ENCODE measurements at regions of chr21 and their contacts with region 1.

Region 1: GRCh38 chr21:42892931-42893755 is at the start of gene NDUFV3:
- DNase-seq: peak; percentile 99 to 100
- H3K4me3 ChIP-seq: peak within 1 kb of the TSS; percentile 87 to 91
- H3K27ac ChIP-seq: peak within 1 kb of the TSS; percentile 90 to 97
- H3K4me1 ChIP-seq: peaks cover 0 to 3% of the 10 kb centered on the region in 2 donors
- H3K27me3 ChIP-seq: no peaks in the 10 kb centered on the region
- CTCF ChIP-seq: no peak
- total RNA-seq, gene NDUFV3: 60.7 TPM

Region 2: DNA sequence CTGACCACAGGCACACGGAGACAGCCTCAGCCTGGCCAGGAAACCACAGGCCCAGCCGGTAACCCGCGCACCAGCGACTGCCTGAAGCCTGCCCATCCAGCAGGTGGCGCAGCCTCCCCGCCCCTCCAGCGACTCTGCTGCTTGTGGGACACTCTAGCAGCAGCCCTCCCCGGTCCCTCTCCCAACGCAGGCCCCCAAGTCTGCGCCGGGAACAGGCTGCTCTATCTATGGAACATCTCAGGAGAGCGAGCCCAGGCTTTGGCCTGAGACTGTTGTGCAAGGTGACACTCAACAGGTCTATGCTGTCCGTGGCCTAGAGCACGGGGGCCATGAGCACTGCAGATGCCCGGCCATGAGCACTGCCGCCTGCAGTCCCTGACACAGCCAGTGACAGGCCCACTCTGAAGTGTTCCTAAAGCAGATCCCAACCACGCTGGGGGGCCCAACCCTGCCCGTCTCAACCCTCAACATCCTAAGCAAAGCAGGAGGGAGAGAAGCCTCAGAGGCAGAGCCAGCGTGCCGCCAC is 42.2 kb before region 1 on chr21:
- intact Hi-C with region 1: no loop called
- DNase-seq: no peak
- H3K4me3 ChIP-seq: no peak overlapping the region
- H3K27ac ChIP-seq: no peak overlapping the region
- H3K4me1 ChIP-seq: no peaks in the 10 kb centered on the region
- H3K27me3 ChIP-seq: no peaks in the 10 kb centered on the region
- CTCF ChIP-seq: no peak

Region 3: GRCh38 chr21:42878993-42879787 is 14.0 kb before region 1 on chr21 and contains the start of gene WDR4:
- intact Hi-C with region 1: loop called (anchors 1 kb)
- DNase-seq: peak; percentile 92 to 99
- H3K4me3 ChIP-seq: peak within 1 kb of the TSS; percentile 77 to 91
- H3K27ac ChIP-seq: peak within 1 kb of the TSS; percentile 85 to 93
- H3K4me1 ChIP-seq: peaks cover 0 to 15% of the 10 kb centered on the region in 2 donors
- H3K27me3 ChIP-seq: no peaks in the 10 kb centered on the region
- CTCF ChIP-seq: no peak
- total RNA-seq, gene WDR4: 51.9 TPM

Region 4: DNA sequence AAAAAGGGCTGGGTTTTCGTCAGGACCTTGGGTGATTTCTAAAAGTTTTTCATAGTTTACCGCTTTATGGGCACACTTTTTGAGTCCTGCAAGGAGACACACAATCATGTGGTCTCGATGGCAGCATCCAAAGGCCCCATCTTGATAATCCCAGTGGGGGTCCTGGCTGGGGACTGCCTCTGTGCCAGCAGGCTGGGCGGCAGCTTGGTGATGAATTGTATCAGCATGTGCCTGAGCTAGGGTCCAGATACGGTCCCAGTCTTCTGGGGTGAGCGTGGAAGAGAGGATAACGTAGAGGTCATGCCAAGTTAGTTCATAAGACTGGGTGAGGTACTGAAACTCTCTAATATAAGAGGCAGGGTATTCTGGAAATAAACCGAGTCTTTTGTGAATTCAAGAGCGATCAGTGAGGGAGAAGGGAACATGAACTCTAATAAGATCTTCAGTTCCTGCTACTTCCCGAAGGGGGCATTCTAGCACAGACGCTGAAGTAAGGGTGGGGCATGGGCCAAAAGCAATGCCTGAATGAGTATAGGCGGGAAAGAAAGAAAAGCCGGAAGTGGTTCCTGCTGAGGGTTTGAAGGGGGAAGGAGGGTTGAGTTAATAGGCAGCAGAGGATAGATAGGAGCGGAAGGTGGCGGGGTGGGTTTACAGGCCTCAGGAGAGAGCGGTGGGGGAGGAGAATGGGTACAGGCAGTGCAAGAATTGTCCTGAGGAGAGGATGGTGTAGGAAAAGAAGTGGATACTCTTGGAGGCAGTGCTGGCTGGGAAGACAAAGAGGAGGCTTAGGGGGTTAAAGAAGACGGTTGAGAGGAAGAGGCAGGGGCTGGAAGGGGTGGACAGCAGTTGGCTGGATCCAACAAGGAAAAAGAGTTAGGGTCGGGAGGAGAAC is 30.6 kb after region 1 on chr21:
- intact Hi-C with region 1: no loop called
- DNase-seq: peak in 1 of 2 donors; percentile 89
- H3K4me3 ChIP-seq: peak overlapping the region in 1 of 2 donors; percentile 24
- H3K27ac ChIP-seq: no peak overlapping the region
- H3K4me1 ChIP-seq: no peaks in the 10 kb centered on the region
- H3K27me3 ChIP-seq: no peaks in the 10 kb centered on the region
- CTCF ChIP-seq: peak; percentile 61 to 87 (median 82)

Measured in ascending aorta (tissue), 2 donors.